ENCODE measurements at regions of chr10 and their contacts with region 1.

Region 1: DNA sequence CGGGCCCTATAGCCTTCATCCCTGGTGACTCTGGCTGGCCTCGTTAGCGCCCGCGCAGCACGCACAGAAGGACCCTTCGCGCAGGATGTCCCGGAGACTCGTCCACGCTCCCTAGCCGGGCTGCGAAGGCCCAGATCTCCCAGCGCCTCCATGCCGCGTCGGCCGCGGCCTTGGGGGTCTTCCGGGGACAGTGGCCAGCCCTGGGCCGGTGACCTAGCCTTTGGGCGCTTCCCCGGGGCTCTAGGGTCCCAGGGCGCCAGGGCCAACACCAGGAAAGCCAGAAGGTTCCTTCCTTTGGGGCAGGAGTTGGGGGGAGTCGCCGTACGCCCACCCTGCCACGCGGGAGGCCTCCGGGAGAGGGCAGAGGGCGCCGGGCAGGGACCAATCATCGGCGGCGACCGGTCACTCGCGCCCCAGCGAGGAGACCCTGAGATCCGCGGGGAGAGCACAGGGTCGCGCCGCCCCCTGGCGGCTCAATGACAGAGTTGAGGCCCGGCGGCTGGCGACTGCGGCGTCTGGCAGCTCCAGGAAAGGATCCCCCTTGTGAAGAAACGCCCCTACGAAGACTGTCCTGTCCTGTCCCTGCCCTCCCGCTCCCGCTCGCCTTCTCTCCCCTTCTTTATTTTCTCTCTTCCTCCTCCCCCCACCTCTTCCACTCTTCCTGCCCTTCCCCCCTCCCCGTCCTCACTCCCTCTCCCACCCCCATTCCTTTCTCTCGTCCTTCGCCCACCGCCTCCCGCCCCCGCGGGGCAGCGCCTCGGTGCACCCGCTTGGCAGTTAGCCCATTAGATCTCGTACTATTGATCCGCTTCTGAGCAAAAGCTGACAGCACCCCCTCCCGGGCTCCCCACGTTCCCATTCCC is 62.3 kb upstream of the LBX1 start:
- DNase-seq: peak; percentile 55
- H3K4me3 Mint-ChIP-seq: peak overlapping the region; percentile 69
- H3K27ac Mint-ChIP-seq: no peak overlapping the region
- H3K4me1 Mint-ChIP-seq: peaks cover 8% of the 10 kb centered on the region
- H3K27me3 Mint-ChIP-seq: peaks cover 58% of the 10 kb centered on the region

Region 2: DNA sequence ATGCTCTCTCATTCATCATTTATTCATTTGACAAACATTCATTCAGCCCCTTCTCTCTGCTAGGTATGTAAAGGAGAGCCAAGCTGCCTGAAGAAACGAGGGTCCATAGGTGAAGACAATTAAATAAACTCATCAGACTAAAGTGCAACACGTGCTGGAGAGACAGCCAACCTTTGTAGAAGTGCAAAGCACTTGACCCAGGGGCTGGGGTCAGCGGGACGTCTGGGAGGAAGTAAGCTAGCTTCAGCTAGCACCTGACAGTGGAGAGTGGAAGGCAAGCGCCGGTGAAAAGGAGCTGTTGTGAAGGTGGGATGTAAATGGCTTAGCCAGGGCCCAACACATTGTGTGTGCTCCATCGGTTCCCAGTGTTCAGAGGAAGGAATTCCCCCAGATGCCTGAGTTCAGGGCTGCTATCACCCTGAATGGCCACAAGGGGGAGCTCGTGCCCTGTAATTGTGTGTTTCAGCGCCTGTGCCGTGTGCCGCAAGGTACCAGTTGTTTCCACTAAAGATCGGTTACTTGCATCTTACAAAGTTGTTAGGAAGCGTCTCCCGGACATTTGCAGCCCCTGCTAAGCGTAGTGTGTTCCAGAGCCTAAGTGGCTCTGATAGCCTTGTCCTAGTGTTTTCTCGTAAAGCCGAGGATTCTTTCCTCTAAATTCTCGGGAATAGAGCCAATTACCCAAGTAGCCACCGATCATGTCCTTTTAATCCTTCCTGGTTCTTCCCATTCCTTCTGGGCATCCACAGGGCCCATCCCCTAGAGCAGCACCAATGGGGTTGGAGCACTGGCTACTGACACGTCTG is 129.9 kb before region 1 on chr10:
- CTCF ChIA-PET with region 1: interaction called, 3 read pairs
- intact Hi-C with region 1: loop called (anchors 1 kb)
- DNase-seq: peak; percentile 87
- H3K4me3 Mint-ChIP-seq: peak overlapping the region; percentile 15
- H3K27ac Mint-ChIP-seq: no peak overlapping the region
- H3K4me1 Mint-ChIP-seq: peaks cover 13% of the 10 kb centered on the region
- H3K27me3 Mint-ChIP-seq: peaks cover 53% of the 10 kb centered on the region

Measured in activated naive CD4-positive, alpha-beta T cell treated with anti-CD3 and anti-CD28 coated beads for 36 hours (primary cell).